Astrocyte of the cerebellum (primary cell): ENCODE measurements at regions of chr15 and their contacts with region 1.

Region 1: DNA sequence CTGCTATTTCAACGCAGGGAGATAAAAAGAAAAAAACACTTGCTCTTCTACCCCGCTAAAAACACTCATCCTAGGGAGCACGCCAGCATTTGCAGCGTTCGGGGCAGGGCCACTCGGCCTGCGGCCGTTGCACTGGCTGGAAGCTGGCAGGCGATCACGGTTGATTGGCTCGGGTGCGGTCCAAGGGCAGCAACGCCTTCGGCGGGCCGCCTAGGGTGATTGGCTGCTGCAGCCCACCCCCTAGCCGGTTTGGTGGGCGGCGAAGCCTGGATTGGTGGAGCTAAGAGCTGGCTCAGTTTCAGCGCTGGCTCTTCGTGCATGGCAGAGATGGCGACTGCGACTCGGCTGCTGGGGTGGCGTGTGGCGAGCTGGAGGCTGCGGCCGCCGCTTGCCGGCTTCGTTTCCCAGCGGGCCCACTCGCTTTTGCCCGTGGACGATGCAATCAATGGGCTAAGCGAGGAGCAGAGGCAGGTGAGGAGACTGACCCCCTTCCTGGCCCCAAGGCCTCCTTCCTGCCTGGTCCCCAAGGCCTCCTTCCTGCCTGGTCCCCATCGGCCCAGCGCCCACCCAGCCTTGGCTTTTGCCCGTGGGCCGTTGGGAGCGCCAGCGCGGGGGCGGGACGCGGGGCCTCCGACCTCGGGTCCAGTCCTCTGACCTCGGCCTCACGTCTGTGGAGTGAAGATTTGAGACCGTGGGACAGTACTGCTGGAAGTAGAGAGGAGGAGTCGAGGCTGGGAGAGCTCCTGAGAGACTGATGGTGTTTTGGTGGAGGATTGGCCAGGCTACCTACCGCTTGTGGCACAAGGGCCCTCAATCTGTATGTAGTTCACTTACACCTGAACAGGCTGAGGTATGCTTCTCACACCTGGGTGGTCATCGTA is at the start of gene IVD:
- DNase-seq: peak; percentile 88
- H3K4me3 ChIP-seq: peak within 1 kb of the TSS; percentile 80
- CTCF ChIP-seq: no peak

Region 2: DNA sequence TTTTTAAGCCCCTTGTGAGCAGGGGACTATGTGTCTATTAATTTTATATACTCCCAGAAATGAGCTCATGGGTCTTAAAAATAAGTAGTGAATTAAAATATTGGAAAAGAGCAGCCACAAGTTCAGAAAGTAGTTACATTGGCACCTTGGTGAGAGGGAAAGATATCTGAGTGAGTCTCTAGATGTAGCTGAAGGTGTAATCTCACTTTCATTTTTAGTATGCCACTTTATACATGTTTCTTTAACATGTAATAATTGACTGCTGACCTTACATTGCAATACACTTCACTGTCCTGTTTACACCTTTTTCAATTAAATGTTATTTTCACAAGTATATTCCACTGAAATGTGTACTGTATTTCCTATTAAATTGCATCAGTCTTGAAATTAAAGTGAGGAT is 179.0 kb before region 1 on chr15:
- in situ Hi-C with region 1: loop called (anchors 10 kb)
- DNase-seq: no peak
- H3K4me3 ChIP-seq: no peak overlapping the region
- CTCF ChIP-seq: no peak

Region 3: GRCh38 chr15:40333922-40334492 is 71.7 kb before region 1 on chr15:
- in situ Hi-C with region 1: no loop called
- DNase-seq: no peak
- H3K4me3 ChIP-seq: no peak overlapping the region
- CTCF ChIP-seq: no peak